Left ventricle myocardium inferior (tissue), 1 donor: ENCODE measurements at regions of chr10 and their contacts with region 1.

Region 1: GRCh38 chr10:74262856-74263255 is 111.8 kb downstream of the ADK start:
- DNase-seq: no peak
- H3K4me3 ChIP-seq: no peak overlapping the region
- H3K27ac ChIP-seq: no peak overlapping the region
- H3K4me1 ChIP-seq: peaks cover 4% of the 10 kb centered on the region
- H3K27me3 ChIP-seq: no peaks in the 10 kb centered on the region
- CTCF ChIP-seq: no peak

Region 2: DNA sequence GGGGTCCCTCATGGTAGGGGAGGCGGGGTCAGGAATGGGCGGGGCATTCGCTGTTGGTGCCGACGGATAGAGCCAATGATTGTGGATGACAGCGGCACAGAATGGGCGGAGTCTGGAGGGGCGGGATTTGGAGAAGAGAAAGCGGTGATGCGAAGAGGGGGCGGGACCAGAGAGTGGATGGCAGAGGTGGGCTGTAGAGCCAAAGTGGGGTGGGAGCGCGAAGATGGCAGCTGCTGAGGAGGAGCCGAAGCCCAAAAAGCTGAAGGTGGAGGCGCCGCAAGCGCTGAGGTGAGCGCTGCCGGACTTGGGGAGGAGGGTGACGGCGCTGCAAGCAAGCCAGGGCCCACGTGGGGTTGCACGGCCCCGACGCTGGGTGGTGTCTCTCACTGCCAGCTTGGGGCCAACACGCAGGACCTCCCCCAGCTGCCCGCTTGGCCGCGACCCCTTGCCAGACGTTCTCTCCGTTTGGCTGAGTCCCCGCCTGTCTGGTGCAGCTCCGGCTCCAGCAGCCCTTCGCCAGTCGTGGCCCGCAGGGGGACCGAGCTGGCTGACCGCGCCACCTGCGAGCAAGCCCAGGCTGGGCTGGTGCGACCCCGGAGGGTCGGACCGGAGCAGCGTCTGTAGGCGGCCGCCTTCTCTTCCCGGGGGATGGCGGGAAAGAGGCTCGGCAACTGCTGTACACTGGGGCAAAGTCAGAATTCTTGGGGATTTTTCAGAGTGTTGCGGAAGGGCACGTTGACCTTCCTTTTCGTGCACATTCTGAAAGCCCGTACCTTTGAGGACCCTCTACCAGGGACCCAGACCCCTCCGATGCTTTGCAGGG is 111.6 kb before region 1 on chr10 and contains the start of gene ADK:
- intact Hi-C with region 1: no loop called
- DNase-seq: peak; percentile 100
- H3K4me3 ChIP-seq: peak within 1 kb of the TSS; percentile 80
- H3K27ac ChIP-seq: peak within 1 kb of the TSS; percentile 94
- H3K4me1 ChIP-seq: peaks cover 70% of the 10 kb centered on the region
- H3K27me3 ChIP-seq: no peaks in the 10 kb centered on the region
- CTCF ChIP-seq: peak; percentile 41
- total RNA-seq, gene ADK: 41.3 TPM

Region 3: GRCh38 chr10:74227697-74228424 is 35.0 kb before region 1 on chr10:
- intact Hi-C with region 1: no loop called
- DNase-seq: no peak
- H3K4me3 ChIP-seq: no peak overlapping the region
- H3K27ac ChIP-seq: no peak overlapping the region
- H3K4me1 ChIP-seq: peaks cover 4% of the 10 kb centered on the region
- H3K27me3 ChIP-seq: no peaks in the 10 kb centered on the region
- CTCF ChIP-seq: no peak

Region 4: GRCh38 chr10:74361678-74362077 is 98.8 kb after region 1 on chr10:
- intact Hi-C with region 1: no loop called
- DNase-seq: no peak
- H3K4me3 ChIP-seq: no peak overlapping the region
- H3K27ac ChIP-seq: no peak overlapping the region
- H3K4me1 ChIP-seq: peaks cover 10% of the 10 kb centered on the region
- H3K27me3 ChIP-seq: no peaks in the 10 kb centered on the region
- CTCF ChIP-seq: no peak

Region 5: DNA sequence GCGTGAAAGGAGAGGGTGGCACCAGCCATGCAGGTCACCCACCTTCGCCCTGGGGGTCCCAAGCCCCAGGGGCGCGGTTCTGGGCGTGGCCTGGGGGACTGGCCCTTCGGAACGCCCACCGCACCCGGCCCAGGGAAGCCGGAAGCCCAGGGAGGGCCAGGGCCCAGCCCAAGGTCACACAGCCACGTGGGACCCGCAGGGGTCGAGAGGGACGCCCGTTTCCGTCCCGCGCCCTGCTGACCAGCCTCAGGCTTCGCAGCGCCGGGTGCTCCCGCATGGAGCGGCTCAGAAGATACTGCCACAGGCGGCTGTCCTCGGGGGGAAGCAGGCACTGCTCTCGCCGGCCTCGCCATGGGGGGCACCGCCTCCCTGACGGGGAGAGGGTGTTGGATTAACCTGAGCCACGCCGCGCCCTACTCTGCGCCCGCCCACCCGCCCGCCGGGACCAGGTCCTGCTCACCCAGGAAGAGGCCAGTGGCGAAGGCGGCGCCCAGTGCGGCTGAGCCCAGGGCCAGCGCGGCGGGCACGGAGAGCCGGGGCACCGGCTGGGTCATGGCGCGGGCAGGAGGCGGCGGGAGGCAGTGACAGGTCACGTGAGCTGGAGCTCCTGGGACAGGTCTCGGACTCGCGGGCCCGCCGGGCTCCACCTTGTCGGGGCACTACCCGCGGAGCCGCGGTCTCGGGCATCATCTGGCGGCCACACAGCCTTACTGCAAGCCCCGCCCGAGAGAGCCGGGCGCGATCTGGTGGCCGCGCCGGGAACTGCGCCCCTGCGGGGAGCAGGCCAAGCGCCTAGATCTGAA is 972.7 kb after region 1 on chr10 and contains the start of gene COMTD1:
- intact Hi-C with region 1: loop called (anchors 10 kb)
- DNase-seq: peak; percentile 93
- H3K4me3 ChIP-seq: peak within 1 kb of the TSS; percentile 91
- H3K27ac ChIP-seq: peak within 1 kb of the TSS; percentile 94
- H3K4me1 ChIP-seq: peaks cover 22% of the 10 kb centered on the region
- H3K27me3 ChIP-seq: no peaks in the 10 kb centered on the region
- CTCF ChIP-seq: peak; percentile 100
- total RNA-seq, gene COMTD1: 29.0 TPM